Gastrocnemius medialis (tissue), 4 donors: ENCODE measurements at regions of chr2 and their contacts with region 1.

Region 1: DNA sequence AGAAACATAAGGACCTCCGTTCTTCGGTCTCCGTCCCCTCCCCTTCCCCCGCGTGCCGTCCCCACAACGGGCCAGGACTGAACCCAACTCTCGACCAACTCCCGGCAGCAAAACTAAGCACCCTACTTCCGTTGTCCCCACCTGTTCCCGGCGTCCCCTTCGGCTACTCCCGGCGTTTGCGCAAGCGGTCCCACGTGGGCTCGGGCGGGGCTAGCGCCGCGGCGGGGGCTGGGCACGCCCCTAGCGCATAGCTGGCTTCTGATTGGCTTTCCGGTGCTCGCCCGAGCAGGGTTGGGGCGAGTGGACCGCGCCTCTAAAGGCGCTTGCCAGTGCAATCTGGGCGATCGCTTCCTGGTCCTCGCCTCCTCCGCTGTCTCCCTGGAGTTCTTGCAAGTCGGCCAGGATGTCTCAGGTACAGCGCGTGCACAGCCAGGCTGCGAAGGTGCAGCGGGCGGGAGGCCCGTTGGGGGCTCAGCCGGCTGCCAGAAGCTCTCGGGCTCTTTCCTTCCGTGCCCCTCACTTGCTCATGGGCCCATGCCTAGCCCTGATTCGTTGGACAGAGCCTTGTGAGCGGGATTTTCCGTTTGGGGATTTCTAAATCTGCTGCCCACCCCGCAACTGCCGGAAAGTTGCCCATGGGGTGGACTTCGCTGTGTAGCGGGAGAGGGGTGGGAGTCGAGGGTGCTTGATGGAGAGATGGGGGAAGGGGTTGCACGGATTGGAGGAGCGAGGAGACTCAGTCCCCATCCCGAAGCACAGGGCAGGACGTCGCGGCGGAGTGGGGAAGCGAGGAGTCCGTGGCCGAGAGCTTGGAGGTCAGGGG is at the starts of genes C2orf76 and DBI:
- DNase-seq: peak; percentile 94 to 96
- ATAC-seq: peak; percentile 84 to 86
- H3K4me3 ChIP-seq: peak within 1 kb of the TSS; percentile 67 to 81 (median 78)
- H3K27ac ChIP-seq: peak within 1 kb of the TSS; percentile 87 to 95 (median 95)
- H3K4me1 ChIP-seq: peaks cover 44 to 47% of the 10 kb centered on the region in 2 donors
- H3K27me3 ChIP-seq: no peaks in the 10 kb centered on the region
- CTCF ChIP-seq: peak in 1 of 5 experiments; percentile 9
- POLR2A ChIP-seq: peak; percentile 90 to 91
- total RNA-seq, gene C2orf76: 0.61 to 5.9 (median 2.6) TPM in 3 of 4 donors, not detected in the other
- total RNA-seq, gene DBI: 17.3 to 102 (median 55.2) TPM

Region 2: DNA sequence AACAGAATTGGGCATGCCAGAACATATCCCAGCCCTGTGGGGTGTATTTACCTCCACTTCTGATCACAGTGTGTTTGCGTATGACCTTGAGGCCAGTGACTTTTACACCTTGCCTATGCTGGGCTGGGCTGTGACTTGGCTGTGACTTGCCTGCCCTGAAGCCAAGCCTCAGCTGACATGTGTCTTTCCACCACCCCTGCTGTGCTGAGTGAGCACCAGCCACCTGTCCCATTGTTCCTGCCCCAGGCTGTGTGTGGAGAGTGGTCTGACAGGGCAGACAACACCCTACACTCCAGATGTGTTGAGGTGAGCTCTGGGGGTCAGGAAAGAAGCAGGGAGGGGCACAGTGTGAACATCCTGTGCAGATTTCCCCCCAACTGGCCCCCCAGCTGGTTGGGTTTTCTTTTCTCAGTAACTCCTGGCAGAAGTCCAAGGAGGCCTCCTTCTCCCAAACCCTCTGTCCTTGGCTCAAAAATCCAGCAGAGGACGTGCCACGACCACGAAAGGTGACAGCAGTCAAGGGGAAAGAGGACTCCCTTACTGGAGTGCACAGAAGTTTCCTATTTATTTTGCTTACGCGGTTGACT is 148.3 kb before region 1 on chr2:
- in situ Hi-C with region 1: no loop called
- intact Hi-C with region 1: loop called (anchors 5 kb)
- DNase-seq: peak; percentile 69 to 76
- ATAC-seq: peak; percentile 77
- H3K4me3 ChIP-seq: no peak overlapping the region
- H3K27ac ChIP-seq: peak overlapping the region; percentile 10 to 80 (median 71)
- H3K4me1 ChIP-seq: peaks cover 7 to 16% of the 10 kb centered on the region in 2 donors
- H3K27me3 ChIP-seq: no peaks in the 10 kb centered on the region
- CTCF ChIP-seq: peak; percentile 54 to 78 (median 68)
- POLR2A ChIP-seq: no peak

Region 3: GRCh38 chr2:119234377-119235019 is 132.4 kb before region 1 on chr2:
- in situ Hi-C with region 1: no loop called
- intact Hi-C with region 1: loop called (anchors 5 kb)
- DNase-seq: peak in 1 of 2 donors; percentile 31
- ATAC-seq: peak; percentile 13 to 37
- H3K4me3 ChIP-seq: no peak overlapping the region
- H3K27ac ChIP-seq: peak overlapping the region; percentile 84 to 87 (median 85)
- H3K4me1 ChIP-seq: peaks cover 78 to 79% of the 10 kb centered on the region in 2 donors
- H3K27me3 ChIP-seq: no peaks in the 10 kb centered on the region
- CTCF ChIP-seq: peak in 2 of 5 experiments; percentile 9 to 41
- POLR2A ChIP-seq: no peak

Region 4: DNA sequence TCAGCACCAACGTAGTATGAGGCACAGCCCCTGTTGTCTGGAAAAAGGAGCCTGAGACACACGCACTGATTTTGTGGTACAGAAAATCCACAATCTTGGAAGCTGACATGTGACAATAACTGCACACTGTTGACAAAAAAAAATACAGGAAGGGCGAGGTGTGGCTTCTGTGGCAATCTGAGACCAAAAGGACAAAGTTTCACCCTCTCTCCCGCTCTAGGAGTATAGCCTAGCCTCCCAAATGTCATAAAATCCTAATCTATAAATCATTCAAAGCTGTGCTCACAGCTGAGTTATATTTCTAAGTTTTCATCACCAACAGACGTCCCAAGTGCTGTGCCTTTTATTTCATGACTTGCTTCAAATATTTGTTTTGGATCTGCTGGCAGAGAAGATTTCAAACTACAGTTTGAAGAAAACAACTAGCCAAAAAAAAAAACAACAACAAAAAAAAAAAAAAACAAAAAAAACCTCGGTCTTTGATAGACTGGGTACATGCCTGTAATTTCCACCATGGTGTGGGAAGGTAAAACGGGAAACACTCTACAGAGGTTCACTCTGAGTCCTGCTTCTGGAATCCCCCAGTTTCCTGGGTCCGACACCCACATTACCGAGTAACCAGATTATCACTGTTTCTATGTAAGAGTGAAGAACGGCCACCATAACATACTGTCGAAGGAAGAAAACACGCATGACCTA is 61.2 kb before region 1 on chr2:
- in situ Hi-C with region 1: no loop called
- intact Hi-C with region 1: loop called (anchors 5 kb)
- DNase-seq: no peak
- ATAC-seq: peak; percentile 60 to 77
- H3K4me3 ChIP-seq: peak overlapping the region; percentile 24 to 49 (median 42)
- H3K27ac ChIP-seq: peak overlapping the region; percentile 82 to 90 (median 85)
- H3K4me1 ChIP-seq: peaks cover 8 to 19% of the 10 kb centered on the region in 2 donors
- H3K27me3 ChIP-seq: no peaks in the 10 kb centered on the region
- CTCF ChIP-seq: no peak
- POLR2A ChIP-seq: no peak

Region 5: DNA sequence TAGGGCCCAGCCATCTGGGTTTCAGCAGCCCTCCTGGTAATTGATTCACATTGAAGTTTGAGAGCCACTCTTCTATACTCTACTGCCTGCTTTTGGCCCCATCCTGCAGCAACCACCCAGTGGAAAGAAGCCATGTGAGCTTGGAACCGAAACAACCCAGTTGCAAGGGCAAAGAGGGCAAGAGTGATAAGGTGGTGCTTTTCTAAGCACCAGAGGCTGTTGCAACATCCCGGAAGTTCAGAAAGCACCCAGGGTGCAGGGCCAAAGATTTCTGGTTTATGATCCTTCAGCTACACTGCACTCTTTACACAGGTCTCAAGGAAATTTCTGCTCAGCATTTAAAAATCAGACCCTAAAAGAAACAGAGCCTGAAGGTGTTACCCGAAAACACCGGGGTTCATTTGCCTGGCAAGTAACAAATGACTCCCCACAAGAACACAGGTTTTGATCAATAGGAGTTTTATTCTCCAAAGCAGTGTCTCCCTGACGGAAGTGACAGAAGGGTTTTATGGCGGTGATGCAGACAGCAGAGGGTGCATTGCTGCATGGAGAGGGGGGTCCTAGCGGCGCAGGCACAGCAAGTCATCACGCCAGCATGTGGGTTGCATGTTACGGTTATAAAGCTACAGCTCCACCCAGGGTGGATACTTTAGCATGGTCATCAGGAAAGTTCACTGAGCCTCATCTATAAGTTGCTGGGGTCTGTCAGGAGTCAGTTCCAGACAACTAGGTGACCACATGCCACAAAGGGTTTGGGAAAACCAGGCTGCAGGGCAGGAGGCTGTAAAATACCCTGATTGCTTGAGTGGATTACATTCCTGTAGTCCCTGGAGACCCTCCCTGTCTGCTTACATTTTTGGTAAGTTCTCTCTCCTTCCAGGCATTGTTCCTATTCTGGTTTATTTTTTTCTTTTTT is 36.0 kb after region 1 on chr2:
- in situ Hi-C with region 1: no loop called
- intact Hi-C with region 1: no loop called
- DNase-seq: no peak
- ATAC-seq: no peak
- H3K4me3 ChIP-seq: no peak overlapping the region
- H3K27ac ChIP-seq: no peak overlapping the region
- H3K4me1 ChIP-seq: peaks cover 0 to under 1% of the 10 kb centered on the region in 2 donors
- H3K27me3 ChIP-seq: no peaks in the 10 kb centered on the region
- CTCF ChIP-seq: no peak
- POLR2A ChIP-seq: no peak

Region 6: GRCh38 chr2:119487434-119488244 is 120.8 kb after region 1 on chr2:
- in situ Hi-C with region 1: no loop called
- intact Hi-C with region 1: loop called (anchors 5 kb)
- DNase-seq: no peak
- ATAC-seq: no peak
- H3K4me3 ChIP-seq: no peak overlapping the region
- H3K27ac ChIP-seq: peak overlapping the region in 3 of 4 donors; percentile 72 to 88 (median 82)
- H3K4me1 ChIP-seq: peaks cover 44 to 77% of the 10 kb centered on the region in 2 donors
- H3K27me3 ChIP-seq: no peaks in the 10 kb centered on the region
- CTCF ChIP-seq: no peak
- POLR2A ChIP-seq: no peak